ENCODE measurements at regions of chr18 and their contacts with region 1.

Region 1: GRCh38 chr18:62672600-62672999 is 42.7 kb upstream of the PHLPP1 start:
- DNase-seq: no peak
- H3K4me3 ChIP-seq: no peak overlapping the region
- H3K27ac ChIP-seq: no peak overlapping the region
- H3K4me1 ChIP-seq: peaks cover 18% of the 10 kb centered on the region
- H3K27me3 ChIP-seq: no peaks in the 10 kb centered on the region
- CTCF ChIP-seq: no peak

Region 2: GRCh38 chr18:62445386-62445917 is 227.1 kb before region 1 on chr18:
- CTCF ChIA-PET with region 1: no interaction called
- POLR2A ChIA-PET with region 1: no interaction called
- intact Hi-C with region 1: loop called (anchors 5 kb)
- DNase-seq: peak; percentile 81
- H3K4me3 ChIP-seq: no peak overlapping the region
- H3K27ac ChIP-seq: no peak overlapping the region
- H3K4me1 ChIP-seq: peaks cover 29% of the 10 kb centered on the region
- H3K27me3 ChIP-seq: no peaks in the 10 kb centered on the region
- CTCF ChIP-seq: no peak

Region 3: GRCh38 chr18:62825382-62825781 is 152.8 kb after region 1 on chr18:
- CTCF ChIA-PET with region 1: no interaction called
- POLR2A ChIA-PET with region 1: interaction called, 17 read pairs
- intact Hi-C with region 1: no loop called
- DNase-seq: no peak
- H3K4me3 ChIP-seq: no peak overlapping the region
- H3K27ac ChIP-seq: no peak overlapping the region
- H3K4me1 ChIP-seq: no peaks in the 10 kb centered on the region
- H3K27me3 ChIP-seq: no peaks in the 10 kb centered on the region
- CTCF ChIP-seq: no peak

Region 4: GRCh38 chr18:63119647-63120046 is 447.0 kb after region 1 on chr18:
- CTCF ChIA-PET with region 1: no interaction called
- POLR2A ChIA-PET with region 1: no interaction called
- intact Hi-C with region 1: no loop called
- DNase-seq: peak; percentile 89
- H3K4me3 ChIP-seq: no peak overlapping the region
- H3K27ac ChIP-seq: peak overlapping the region; percentile 81
- H3K4me1 ChIP-seq: peaks cover 25% of the 10 kb centered on the region
- H3K27me3 ChIP-seq: no peaks in the 10 kb centered on the region
- CTCF ChIP-seq: peak; percentile 79

Region 5: GRCh38 chr18:63207143-63207790 is 534.7 kb after region 1 on chr18:
- CTCF ChIA-PET with region 1: no interaction called
- POLR2A ChIA-PET with region 1: no interaction called
- intact Hi-C with region 1: no loop called
- DNase-seq: no peak
- H3K4me3 ChIP-seq: no peak overlapping the region
- H3K27ac ChIP-seq: no peak overlapping the region
- H3K4me1 ChIP-seq: no peaks in the 10 kb centered on the region
- H3K27me3 ChIP-seq: no peaks in the 10 kb centered on the region
- CTCF ChIP-seq: no peak